A549 (cell line): ENCODE measurements at regions of chr1 and their contacts with region 1.

Region 1: DNA sequence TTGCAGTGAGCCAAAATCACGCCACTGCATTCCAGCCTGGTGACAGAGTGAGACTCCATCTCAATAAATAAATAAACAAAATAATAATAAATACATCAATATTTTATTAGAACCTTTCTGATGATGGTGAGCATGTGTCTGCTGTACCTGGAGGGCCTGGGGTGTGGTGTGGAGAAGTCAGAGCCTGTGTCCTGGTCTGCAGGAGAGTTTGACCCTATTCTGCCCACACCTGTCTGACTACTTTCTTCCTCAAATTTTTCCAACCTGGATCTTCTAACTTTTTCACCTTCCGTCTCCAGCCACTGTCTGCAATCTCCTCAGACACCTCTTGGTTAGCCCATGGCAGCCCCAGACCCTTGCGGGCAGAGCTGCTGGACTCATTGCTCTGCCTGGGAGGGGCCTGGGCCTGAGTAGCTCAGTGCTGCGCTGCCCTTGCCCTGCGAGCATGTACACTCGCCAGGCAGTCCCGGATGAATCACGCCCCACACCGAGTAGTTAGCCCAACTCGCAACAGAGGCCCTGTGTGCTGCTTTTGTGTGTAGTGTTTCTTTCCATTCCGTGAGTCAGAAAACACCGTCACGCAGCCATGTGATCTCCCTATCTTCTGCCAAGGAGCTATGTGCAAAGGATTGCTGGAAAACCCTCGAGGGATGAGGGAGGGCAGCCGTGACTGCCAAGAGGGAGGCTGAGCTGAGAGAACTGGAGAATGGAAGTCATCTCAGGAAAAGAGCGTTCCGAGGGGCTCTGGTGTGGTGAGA is 37.2 kb downstream of the NENF start:
- DNase-seq: peak; percentile 56 to 78
- ATAC-seq: peak; percentile 91 to 96
- H3K4me3 ChIP-seq: no peak overlapping the region
- H3K27ac ChIP-seq: peak overlapping the region; percentile 65 to 76
- H3K4me1 ChIP-seq: peaks cover 14% of the 10 kb centered on the region; the same call in 2 of the 3 replicates
- CTCF ChIP-seq: no peak
- EP300 ChIP-seq: no peak; a peak in 1 of 5 replicates
- POLR2A ChIP-seq: no peak
- RAD21 ChIP-seq: no peak

Region 2: GRCh38 chr1:212482384-212483281 is 12.8 kb after region 1 on chr1:
- CTCF ChIA-PET with region 1: interaction called, 63 read pairs
- POLR2A ChIA-PET with region 1: no interaction called
- DNase-seq: peak; percentile 31 to 84
- ATAC-seq: peak in 1 of 2 experiments; percentile 31; a peak in 3 of 6 replicates
- H3K4me3 ChIP-seq: no peak overlapping the region
- H3K27ac ChIP-seq: peak overlapping the region; percentile 75 to 86
- H3K4me1 ChIP-seq: peaks cover 72% of the 10 kb centered on the region
- CTCF ChIP-seq: no peak
- EP300 ChIP-seq: 0 out of 5 replicates have a peak, but pooled peaks of 1 of the 2 experiments have one; percentile 24
- POLR2A ChIP-seq: no peak
- RAD21 ChIP-seq: no peak